ENCODE measurements at regions of chr2 and their contacts with region 1.

Region 1: GRCh38 chr2:113889471-113890252 is at the start of gene ACTR3:
- DNase-seq: peak; percentile 99
- H3K4me3 ChIP-seq: peak within 1 kb of the TSS; percentile 98 to 100 (median 98)
- H3K27ac ChIP-seq: peak within 1 kb of the TSS; percentile 88
- H3K4me1 ChIP-seq: peaks cover 53% of the 10 kb centered on the region
- H3K27me3 ChIP-seq: no peaks in the 10 kb centered on the region
- CTCF ChIP-seq: no peak
- total RNA-seq, gene ACTR3: 261 to 358 TPM

Region 2: DNA sequence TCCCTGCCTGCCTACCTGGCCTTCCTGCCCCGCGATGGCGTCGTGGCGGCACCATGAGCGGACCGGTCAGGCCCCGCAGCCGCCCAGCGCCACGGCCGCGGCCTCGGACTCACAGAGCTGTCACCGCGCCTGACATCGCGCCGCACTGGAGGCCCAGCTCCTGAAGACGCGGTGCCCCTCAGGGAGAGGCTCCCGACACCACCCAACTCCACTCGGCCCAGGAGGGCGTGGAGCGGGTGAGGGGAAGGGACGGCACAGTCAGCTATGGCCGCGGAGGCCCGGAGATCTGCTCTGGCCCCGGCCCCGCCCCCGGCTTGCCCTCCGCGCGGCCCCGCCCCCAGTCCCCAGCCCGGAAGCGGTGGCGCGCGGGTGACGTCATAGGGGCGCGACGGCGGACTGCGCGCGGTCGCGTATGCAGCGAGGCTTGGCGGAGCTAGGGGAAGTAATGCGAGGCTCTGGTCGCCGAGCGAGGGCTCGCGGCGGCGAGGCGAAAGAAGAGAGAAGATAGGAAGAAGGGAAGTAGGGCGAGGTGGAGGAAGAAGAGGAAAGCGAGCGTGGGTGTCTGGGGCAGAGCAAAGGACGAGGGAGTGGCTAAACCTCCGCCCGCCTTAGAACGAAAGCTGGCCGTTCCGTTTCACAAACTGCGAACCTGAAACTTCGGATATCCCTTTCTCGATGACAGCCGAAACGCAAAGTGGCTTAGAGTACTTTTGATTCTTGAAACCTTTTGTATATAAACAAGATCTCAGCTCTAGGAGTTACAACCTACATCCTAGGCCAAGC is 133.1 kb before region 1 on chr2 and contains the start of gene SLC35F5:
- CTCF ChIA-PET with region 1: no interaction called
- dilution Hi-C with region 1: no loop called
- in situ Hi-C with region 1: loop called (anchors 5 to 10 kb)
- intact Hi-C with region 1: loop called (anchors 1 kb)
- DNase-seq: peak; percentile 93
- H3K4me3 ChIP-seq: peak within 1 kb of the TSS; percentile 89 to 93 (median 91)
- H3K27ac ChIP-seq: peak within 1 kb of the TSS; percentile 87
- H3K4me1 ChIP-seq: peaks cover 8% of the 10 kb centered on the region
- H3K27me3 ChIP-seq: no peaks in the 10 kb centered on the region
- CTCF ChIP-seq: peak in 1 of 2 donors; percentile 14
- total RNA-seq, gene SLC35F5: 66.7 to 148 TPM

Region 3: GRCh38 chr2:113799375-113799774 is 90.3 kb before region 1 on chr2:
- CTCF ChIA-PET with region 1: no interaction called
- dilution Hi-C with region 1: no loop called
- in situ Hi-C with region 1: no loop called
- intact Hi-C with region 1: loop called (anchors 5 kb)
- DNase-seq: no peak
- H3K4me3 ChIP-seq: no peak overlapping the region
- H3K27ac ChIP-seq: no peak overlapping the region
- H3K4me1 ChIP-seq: no peaks in the 10 kb centered on the region
- H3K27me3 ChIP-seq: no peaks in the 10 kb centered on the region
- CTCF ChIP-seq: peak in 1 of 2 donors; percentile 27

Region 4: GRCh38 chr2:113818382-113818951 is 71.2 kb before region 1 on chr2:
- CTCF ChIA-PET with region 1: no interaction called
- dilution Hi-C with region 1: loop called (anchors 5 kb)
- in situ Hi-C with region 1: no loop called
- intact Hi-C with region 1: loop called (anchors 2 kb)
- DNase-seq: peak; percentile 84
- H3K4me3 ChIP-seq: peak overlapping the region in 1 of 3 experiments; percentile 5
- H3K27ac ChIP-seq: peak overlapping the region; percentile 32
- H3K4me1 ChIP-seq: peaks cover 16% of the 10 kb centered on the region
- H3K27me3 ChIP-seq: no peaks in the 10 kb centered on the region
- CTCF ChIP-seq: no peak

Region 5: GRCh38 chr2:113848758-113849415 is 40.8 kb before region 1 on chr2:
- CTCF ChIA-PET with region 1: no interaction called
- dilution Hi-C with region 1: no loop called
- in situ Hi-C with region 1: loop called in 1 of 2 experiments (anchors 5 kb)
- intact Hi-C with region 1: loop called (anchors 2 kb)
- DNase-seq: peak; percentile 98
- H3K4me3 ChIP-seq: no peak overlapping the region
- H3K27ac ChIP-seq: peak overlapping the region; percentile 85
- H3K4me1 ChIP-seq: peaks cover 14% of the 10 kb centered on the region
- H3K27me3 ChIP-seq: no peaks in the 10 kb centered on the region
- CTCF ChIP-seq: no peak

Region 6: DNA sequence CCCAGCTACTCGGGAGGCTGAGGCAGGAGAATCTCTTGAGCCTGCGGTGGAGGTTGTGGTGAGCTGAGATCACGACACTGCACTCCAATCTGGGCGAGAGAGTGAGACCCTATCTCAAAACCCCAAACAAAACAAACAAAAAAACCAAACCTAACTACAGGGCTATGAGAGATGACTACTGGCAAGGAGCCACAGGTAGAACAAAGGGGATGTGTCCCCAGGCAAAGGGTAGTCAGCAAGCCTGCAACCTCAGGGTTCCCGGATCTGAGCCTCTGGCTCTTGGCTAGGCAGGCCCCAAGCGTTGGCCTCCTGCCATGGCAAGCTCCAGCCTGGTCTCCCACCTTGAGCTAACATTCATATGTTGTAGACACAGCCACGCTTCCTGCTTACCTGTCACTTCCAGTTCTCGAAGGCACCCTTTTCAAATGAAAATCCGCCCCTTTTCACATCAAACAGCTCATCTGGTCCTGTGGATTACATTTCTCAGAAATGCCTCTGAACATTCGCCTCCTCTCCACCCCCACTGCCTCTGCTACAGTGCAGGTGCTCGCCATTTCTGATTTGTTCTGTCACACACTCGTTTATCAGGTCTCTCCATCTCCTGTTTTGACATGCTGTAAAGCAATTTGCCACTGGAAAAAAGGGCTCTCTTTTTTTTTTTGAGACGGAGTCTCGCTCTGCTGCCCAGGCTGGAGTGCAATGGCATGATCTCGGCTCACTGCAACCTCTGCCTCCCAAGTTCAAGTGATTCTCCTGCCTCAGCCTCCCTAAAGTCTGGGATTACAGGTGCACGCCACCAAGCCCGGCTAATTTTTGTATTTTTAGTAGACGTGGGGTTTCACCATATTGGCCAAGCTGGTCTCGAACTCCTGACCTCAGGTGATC is 12.9 kb before region 1 on chr2:
- CTCF ChIA-PET with region 1: no interaction called
- dilution Hi-C with region 1: no loop called
- in situ Hi-C with region 1: no loop called
- intact Hi-C with region 1: no loop called
- DNase-seq: peak; percentile 88
- H3K4me3 ChIP-seq: no peak overlapping the region
- H3K27ac ChIP-seq: no peak overlapping the region
- H3K4me1 ChIP-seq: peaks cover 31% of the 10 kb centered on the region
- H3K27me3 ChIP-seq: no peaks in the 10 kb centered on the region
- CTCF ChIP-seq: no peak

Region 7: GRCh38 chr2:113926314-113926713 is 36.7 kb after region 1 on chr2:
- CTCF ChIA-PET with region 1: no interaction called
- dilution Hi-C with region 1: no loop called
- in situ Hi-C with region 1: no loop called
- intact Hi-C with region 1: loop called (anchors 5 kb)
- DNase-seq: no peak
- H3K4me3 ChIP-seq: no peak overlapping the region
- H3K27ac ChIP-seq: no peak overlapping the region
- H3K4me1 ChIP-seq: no peaks in the 10 kb centered on the region
- H3K27me3 ChIP-seq: no peaks in the 10 kb centered on the region
- CTCF ChIP-seq: no peak

Region 8: GRCh38 chr2:114056294-114057143 is 166.9 kb after region 1 on chr2:
- CTCF ChIA-PET with region 1: no interaction called
- dilution Hi-C with region 1: no loop called
- in situ Hi-C with region 1: no loop called
- intact Hi-C with region 1: no loop called
- DNase-seq: no peak
- H3K4me3 ChIP-seq: no peak overlapping the region
- H3K27ac ChIP-seq: no peak overlapping the region
- H3K4me1 ChIP-seq: no peaks in the 10 kb centered on the region
- H3K27me3 ChIP-seq: no peaks in the 10 kb centered on the region
- CTCF ChIP-seq: no peak

Region 9: DNA sequence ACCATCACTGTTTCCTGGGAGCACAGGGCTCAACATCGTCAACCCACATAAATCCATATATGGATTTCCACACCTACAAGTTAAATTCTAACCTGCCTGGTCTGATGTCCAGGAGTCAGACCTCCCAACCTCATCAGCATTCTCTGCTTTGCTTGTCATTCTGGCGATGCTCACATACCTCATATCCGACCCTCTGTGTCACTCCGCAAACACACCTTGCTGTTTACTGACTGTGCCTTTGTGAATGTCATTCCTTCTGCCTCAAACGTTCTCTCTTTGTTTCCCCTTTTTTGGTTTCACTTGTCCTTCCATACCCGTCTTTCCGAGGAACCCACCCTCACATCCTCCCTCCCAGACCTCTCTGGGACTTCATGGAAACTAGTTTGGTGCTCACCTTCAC is 187.3 kb after region 1 on chr2:
- CTCF ChIA-PET with region 1: no interaction called
- dilution Hi-C with region 1: no loop called
- in situ Hi-C with region 1: no loop called
- intact Hi-C with region 1: no loop called
- DNase-seq: no peak
- H3K4me3 ChIP-seq: no peak overlapping the region
- H3K27ac ChIP-seq: no peak overlapping the region
- H3K4me1 ChIP-seq: no peaks in the 10 kb centered on the region
- H3K27me3 ChIP-seq: no peaks in the 10 kb centered on the region
- CTCF ChIP-seq: no peak